ENCODE measurements at regions of chr2 and their contacts with region 1.

Region 1: DNA sequence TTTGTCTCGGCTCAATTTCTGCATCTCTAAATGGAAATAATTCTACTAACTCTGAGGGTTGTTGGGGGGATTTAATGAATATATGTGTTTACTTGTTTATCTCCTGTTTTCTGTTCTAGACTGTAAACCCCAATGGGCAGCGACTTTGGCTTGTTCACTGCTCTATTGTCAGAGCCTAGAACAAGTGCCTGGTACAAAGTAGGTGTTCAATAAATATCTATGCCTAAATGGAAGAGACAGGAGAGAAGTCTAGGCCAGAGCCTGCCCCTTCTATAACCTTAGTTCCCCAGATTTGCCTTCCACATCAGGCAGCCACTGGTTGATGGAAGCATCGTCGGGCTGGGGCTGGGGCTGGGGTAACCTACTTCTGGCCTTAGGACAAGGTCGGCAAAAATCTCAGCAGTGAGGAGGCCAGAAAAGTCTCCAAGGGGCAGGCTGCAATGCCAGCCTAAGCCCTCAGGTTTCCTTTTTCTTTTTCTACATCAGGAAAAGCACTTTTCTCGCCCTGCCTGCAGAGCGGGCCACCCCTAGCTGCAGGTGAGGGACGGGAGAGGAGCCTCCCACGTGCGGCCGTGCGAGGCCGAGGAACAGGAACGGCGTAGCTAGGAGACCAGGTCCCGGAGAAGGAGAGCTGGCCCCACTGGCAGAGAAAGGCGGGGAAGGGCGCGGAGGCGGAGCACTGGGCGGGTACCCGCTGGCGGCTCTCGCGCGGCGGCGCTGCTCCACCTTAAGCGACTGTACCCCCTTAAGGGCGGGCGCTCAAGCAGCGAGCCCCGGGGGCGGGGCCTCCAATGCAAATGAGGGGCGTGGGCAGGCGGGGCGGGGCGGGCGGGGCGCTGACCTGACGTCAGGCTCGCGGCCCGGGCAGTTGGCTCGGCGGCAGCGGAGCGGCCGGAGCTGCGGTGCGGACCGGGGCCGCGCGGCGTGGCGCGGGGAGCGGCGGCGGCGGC is at the start of gene CNNM4:
- DNase-seq: peak; percentile 92
- H3K4me3 Mint-ChIP-seq: peak within 1 kb of the TSS; percentile 83
- H3K27ac Mint-ChIP-seq: peak within 1 kb of the TSS; percentile 72
- H3K4me1 Mint-ChIP-seq: peaks cover 48% of the 10 kb centered on the region
- H3K27me3 Mint-ChIP-seq: no peaks in the 10 kb centered on the region
- total RNA-seq, gene CNNM4: 8.6 to 9.4 TPM

Region 2: DNA sequence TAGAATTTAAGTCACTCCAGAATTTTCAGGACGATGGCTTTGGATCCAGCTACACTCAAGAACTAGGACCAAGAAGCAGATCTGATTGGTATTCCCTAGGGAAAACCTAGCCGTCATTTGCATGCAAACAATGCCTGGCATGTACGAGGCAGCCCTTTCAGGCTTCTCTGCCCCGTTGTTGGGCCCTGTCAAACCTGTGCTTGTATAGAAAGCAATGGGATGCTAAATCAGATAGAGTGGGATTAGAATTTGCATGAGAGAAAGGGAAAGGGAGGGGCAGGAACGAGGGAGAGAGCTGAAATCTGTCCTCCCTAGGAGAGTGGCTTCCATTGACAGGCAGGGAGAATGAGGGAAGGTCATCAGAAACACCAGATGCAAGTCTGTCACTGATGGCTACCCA is 195.2 kb before region 1 on chr2:
- CTCF ChIA-PET with region 1: no interaction called
- POLR2A ChIA-PET with region 1: no interaction called
- DNase-seq: no peak
- H3K4me3 Mint-ChIP-seq: no peak overlapping the region
- H3K27ac Mint-ChIP-seq: no peak overlapping the region
- H3K4me1 Mint-ChIP-seq: no peaks in the 10 kb centered on the region
- H3K27me3 Mint-ChIP-seq: peaks cover 6% of the 10 kb centered on the region

Region 3: DNA sequence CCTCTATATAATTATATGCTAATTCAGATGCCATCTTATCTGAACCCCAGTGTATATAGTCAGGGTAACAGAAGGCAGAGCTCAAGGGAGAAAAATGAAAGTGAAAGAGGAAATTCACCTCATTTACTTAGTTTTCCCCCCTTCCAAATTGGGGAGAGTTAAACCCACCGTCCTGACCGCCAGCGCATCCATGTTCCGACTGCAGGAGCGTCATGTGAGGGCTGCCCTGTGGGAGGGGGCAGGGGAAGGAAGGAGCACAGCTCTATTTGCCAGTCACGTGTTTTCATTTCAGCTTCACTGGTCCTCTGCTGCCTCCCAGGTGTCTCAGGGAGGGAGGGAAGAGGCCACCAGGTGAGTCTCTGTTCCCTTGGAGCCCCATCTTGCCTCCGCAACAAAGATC is 13.6 kb after region 1 on chr2:
- CTCF ChIA-PET with region 1: interaction called, 67 read pairs
- POLR2A ChIA-PET with region 1: interaction called, 13 read pairs
- DNase-seq: peak; percentile 58
- H3K4me3 Mint-ChIP-seq: peak overlapping the region; percentile 77
- H3K27ac Mint-ChIP-seq: peak overlapping the region; percentile 65
- H3K4me1 Mint-ChIP-seq: peaks cover 28% of the 10 kb centered on the region
- H3K27me3 Mint-ChIP-seq: no peaks in the 10 kb centered on the region

Region 4: GRCh38 chr2:96801005-96801785 is 40.9 kb after region 1 on chr2:
- CTCF ChIA-PET with region 1: interaction called, 14 read pairs
- POLR2A ChIA-PET with region 1: no interaction called
- DNase-seq: peak; percentile 74
- H3K4me3 Mint-ChIP-seq: no peak overlapping the region
- H3K27ac Mint-ChIP-seq: no peak overlapping the region
- H3K4me1 Mint-ChIP-seq: peaks cover 2% of the 10 kb centered on the region
- H3K27me3 Mint-ChIP-seq: no peaks in the 10 kb centered on the region

Region 5: DNA sequence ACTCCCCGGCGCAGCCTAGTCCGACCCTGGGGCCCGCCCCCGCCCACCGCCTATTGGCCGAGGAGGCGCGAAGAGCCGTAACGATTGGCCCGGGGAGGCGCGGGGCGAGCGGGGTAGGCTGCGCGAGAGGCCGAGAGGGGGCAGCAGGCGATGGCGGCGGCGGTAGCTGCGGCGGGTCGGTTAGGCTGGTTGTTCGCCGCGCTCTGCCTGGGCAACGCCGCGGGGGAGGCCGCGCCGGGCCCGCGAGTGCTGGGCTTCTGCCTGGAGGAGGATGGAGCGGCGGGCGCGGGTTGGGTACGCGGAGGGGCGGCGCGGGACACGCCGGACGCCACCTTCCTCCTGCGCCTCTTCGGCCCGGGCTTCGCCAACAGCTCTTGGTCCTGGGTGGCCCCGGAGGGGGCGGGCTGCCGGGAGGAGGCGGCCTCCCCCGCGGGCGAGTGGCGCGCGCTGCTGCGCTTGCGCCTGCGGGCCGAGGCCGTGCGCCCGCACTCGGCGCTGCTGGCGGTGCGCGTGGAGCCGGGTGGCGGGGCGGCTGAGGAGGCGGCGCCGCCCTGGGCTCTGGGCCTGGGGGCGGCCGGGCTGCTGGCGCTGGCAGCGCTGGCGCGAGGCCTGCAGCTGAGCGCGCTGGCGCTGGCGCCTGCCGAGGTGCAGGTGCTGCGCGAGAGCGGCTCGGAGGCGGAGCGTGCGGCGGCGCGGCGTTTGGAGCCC is 56.0 kb after region 1 on chr2 and contains the start of gene CNNM3:
- CTCF ChIA-PET with region 1: interaction called, 9 read pairs
- POLR2A ChIA-PET with region 1: interaction called, 10 read pairs
- DNase-seq: peak; percentile 97
- H3K4me3 Mint-ChIP-seq: peak within 1 kb of the TSS; percentile 91
- H3K27ac Mint-ChIP-seq: peak within 1 kb of the TSS; percentile 72
- H3K4me1 Mint-ChIP-seq: peaks cover 59% of the 10 kb centered on the region
- H3K27me3 Mint-ChIP-seq: no peaks in the 10 kb centered on the region
- total RNA-seq, gene CNNM3: 26.6 to 28.5 TPM

Region 6: GRCh38 chr2:96887412-96888012 is 127.2 kb after region 1 on chr2:
- CTCF ChIA-PET with region 1: no interaction called
- POLR2A ChIA-PET with region 1: no interaction called
- DNase-seq: no peak
- H3K4me3 Mint-ChIP-seq: no peak overlapping the region
- H3K27ac Mint-ChIP-seq: no peak overlapping the region
- H3K4me1 Mint-ChIP-seq: peaks cover 10% of the 10 kb centered on the region
- H3K27me3 Mint-ChIP-seq: peaks cover 1% of the 10 kb centered on the region

Region 7: DNA sequence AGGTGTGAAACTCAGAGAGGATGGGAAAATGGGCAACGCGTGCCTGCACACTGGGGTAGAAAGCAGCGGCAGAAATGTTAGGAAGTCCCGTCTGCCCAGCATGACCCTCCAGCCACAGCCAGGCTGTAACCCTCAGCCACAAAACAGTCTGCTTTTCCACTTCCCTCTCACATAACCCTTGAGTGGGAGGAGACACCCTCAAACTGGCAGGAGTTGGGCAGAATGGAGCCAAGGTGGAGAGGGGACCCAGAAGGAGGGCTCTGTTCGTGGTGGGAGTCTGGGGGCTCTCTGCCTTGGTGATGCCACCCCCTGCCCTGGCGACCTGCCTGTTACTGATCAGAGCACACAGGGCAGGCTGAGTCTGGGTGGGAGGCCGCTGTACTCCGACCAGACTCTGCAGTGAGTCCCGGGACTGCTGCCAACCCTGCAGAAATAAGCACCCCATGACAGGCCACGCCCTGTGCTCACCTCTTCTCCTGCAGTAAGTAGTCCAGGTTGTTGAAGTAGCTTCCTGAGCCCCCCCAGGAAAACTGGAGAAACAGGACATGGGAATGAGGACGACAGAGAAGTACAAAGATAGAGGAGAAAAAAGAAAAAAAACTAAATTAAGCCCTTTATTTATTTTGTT is 210.1 kb after region 1 on chr2:
- CTCF ChIA-PET with region 1: no interaction called
- POLR2A ChIA-PET with region 1: no interaction called
- DNase-seq: no peak
- H3K4me3 Mint-ChIP-seq: no peak overlapping the region
- H3K27ac Mint-ChIP-seq: no peak overlapping the region
- H3K4me1 Mint-ChIP-seq: peaks cover 45% of the 10 kb centered on the region
- H3K27me3 Mint-ChIP-seq: peaks cover 2% of the 10 kb centered on the region

Measured in activated CD4-positive, alpha-beta memory T cell treated with anti-CD3 and anti-CD28 coated beads, Interleukin-2, amount 10 ng/mL, durations not matched to agents 7 days and 5 days (primary cell).